ENCODE measurements at regions of chr5 and their contacts with region 1.

Region 1: DNA sequence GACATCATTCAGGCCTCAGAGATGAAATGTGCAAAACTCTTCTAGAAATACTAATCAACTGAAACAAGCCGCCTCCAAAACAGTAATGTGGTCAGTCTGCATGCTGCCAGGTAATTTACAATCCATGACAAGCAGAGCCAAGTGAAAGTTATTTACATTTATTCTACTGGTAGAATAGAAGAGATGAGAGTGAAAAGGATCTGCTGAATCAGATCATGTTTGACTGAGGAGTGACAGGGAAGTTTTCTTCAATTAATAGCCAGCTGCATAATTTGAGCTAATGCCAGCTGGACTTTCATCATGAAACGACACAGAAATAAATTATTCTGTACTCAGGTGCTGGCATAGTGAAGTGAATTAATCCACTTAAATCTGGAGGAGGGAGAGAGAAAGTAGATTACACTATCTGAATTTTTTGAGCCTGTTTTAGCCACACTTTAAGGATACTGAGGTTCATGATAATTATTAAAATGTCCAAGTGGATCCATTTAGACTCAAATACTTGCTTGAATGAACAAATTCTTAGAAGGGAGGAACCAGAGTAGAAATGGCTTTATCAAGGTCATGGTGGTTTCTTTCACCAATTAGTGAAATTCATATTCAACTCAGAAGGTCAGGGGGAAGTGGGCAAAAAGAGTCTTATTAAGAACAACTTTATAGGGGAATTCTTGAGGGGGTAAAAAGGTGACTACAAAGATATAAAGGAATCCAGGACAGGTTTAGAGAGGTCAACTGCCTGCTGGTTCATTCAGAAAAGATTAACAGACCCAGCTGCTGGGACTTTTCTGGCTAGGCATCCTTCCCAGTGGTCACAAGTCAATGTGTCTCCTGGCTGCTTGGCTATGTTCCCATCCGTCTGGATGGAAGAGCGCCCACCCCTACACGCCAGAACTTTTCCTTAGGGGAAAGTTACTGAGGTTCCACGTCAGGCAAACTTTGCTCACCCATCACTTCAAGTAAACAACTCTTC is 350.4 kb downstream of the PDE4D start:
- DNase-seq: peak; percentile 51 to 86
- ATAC-seq: peak; percentile 79 to 81 (median 80)
- H3K4me3 ChIP-seq: peak overlapping the region; percentile 27
- H3K27ac ChIP-seq: peak overlapping the region; percentile 94
- H3K4me1 ChIP-seq: peaks cover 77% of the 10 kb centered on the region
- H3K27me3 ChIP-seq: no peaks in the 10 kb centered on the region
- CTCF ChIP-seq: no peak

Region 2: DNA sequence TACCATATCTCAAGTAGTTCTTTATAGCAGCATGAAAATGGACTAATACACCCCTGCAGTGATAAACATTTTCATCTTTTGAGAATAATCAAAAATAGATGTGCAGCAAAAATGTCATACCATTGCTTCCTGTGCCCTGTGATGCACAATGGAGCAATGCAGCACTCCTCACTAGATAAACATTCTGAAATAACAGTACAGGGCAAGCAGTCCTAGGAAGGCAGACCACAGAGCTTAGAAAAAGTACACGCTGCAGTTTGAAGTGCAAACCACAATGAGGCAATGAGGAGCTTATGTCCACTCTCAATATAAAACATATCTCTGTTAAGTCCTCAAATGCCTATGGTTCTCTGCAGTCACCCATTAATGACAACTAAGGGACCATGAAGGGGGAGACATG is 17.2 kb before region 1 on chr5:
- intact Hi-C with region 1: loop called in 1 of 2 experiments (anchors 1 kb)
- DNase-seq: no peak
- ATAC-seq: peak in 3 of 4 donors; percentile 19 to 49 (median 36)
- H3K4me3 ChIP-seq: no peak overlapping the region
- H3K27ac ChIP-seq: no peak overlapping the region
- H3K4me1 ChIP-seq: peaks cover 18% of the 10 kb centered on the region
- H3K27me3 ChIP-seq: no peaks in the 10 kb centered on the region
- CTCF ChIP-seq: no peak

Region 3: GRCh38 chr5:59562756-59563389 is 19.7 kb after region 1 on chr5:
- intact Hi-C with region 1: loop called in 1 of 2 experiments (anchors 2 kb)
- DNase-seq: peak; percentile 79 to 92
- ATAC-seq: peak; percentile 89 to 93 (median 90)
- H3K4me3 ChIP-seq: no peak overlapping the region
- H3K27ac ChIP-seq: peak overlapping the region; percentile 86
- H3K4me1 ChIP-seq: peaks cover 45% of the 10 kb centered on the region
- H3K27me3 ChIP-seq: no peaks in the 10 kb centered on the region
- CTCF ChIP-seq: no peak

Region 4: GRCh38 chr5:59587489-59588337 is 44.6 kb after region 1 on chr5:
- intact Hi-C with region 1: loop called (anchors 2 to 5 kb)
- DNase-seq: peak; percentile 78 to 90
- ATAC-seq: peak; percentile 81 to 89 (median 84)
- H3K4me3 ChIP-seq: peak overlapping the region; percentile 77
- H3K27ac ChIP-seq: peak overlapping the region; percentile 84
- H3K4me1 ChIP-seq: peaks cover 21% of the 10 kb centered on the region
- H3K27me3 ChIP-seq: no peaks in the 10 kb centered on the region
- CTCF ChIP-seq: peak; percentile 34